ENCODE measurements at regions of chr16 and their contacts with region 1.

Region 1: GRCh38 chr16:75471723-75472633 is 7.5 kb upstream of the TMEM170A start:
- DNase-seq: peak; percentile 71
- H3K4me3 ChIP-seq: no peak overlapping the region
- H3K27ac ChIP-seq: no peak overlapping the region
- H3K4me1 ChIP-seq: peaks cover 0 to 15% (median 0%) of the 10 kb centered on the region in 6 donors
- H3K27me3 ChIP-seq: no peaks in the 10 kb centered on the region
- CTCF ChIP-seq: peak; percentile 34 to 84 (median 70)
- POLR2A ChIP-seq: no peak

Region 2: DNA sequence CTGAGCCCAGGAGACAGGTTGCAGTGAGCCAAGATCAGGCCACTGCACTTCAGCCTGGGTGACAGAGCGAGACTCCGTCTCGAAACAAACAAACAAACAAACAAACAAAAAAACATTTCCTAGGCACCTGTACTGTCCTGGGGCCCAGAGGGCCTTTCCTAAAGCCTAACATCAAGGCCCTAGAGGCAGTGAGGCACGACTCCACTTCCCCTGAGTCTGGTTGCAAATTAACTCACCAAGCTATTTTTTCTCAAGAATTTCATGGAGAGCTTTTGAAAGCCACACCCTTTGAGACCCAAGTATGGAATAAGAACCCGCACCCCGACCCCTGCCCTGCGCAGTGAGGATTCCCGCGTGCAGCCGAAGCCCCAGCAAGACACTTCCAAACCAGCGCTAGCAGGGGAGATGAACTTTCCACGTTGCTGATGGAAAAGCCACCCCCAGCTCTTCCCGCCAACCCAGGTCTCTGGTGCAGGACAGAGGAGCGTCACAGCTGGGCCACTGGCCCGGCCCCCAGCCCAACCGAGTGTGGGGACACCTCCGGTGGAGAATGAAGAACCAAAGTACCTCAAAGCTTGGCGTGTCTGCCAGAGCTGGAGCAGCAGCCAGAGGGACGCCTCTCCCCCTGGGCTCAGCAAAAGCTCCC is 62.7 kb after region 1 on chr16:
- intact Hi-C with region 1: no loop called
- DNase-seq: no peak
- H3K4me3 ChIP-seq: no peak overlapping the region
- H3K27ac ChIP-seq: no peak overlapping the region
- H3K4me1 ChIP-seq: no peaks in the 10 kb centered on the region
- H3K27me3 ChIP-seq: no peaks in the 10 kb centered on the region
- CTCF ChIP-seq: no peak
- POLR2A ChIP-seq: no peak

Region 3: DNA sequence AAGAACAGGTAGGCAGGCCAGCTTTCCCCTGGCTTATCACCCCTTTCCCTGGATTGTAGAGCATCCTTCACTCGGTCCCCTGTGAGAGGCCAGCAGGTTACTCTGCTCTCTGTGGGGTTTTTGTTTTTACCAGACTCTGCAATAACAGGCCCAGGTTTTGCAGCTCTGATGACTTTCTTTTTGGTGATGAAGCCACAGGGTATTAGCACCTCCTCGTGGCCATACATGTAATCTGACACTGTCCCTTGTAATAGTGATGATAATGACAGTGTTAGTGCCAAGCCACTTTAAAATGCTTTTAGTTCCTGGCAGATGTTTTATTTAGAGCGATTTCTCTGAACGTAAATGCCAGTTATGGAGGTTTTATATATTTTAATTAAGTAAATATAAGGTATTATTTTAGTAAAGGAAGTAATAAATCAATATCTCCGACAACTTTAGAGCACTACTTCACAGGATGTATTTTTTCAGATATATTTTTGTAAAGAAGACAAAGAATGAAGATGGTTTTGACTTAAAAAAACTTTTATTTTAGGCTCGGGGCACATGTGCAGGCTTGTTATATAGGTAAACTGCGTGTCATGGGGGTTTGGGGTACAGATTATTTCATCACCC is 292.3 kb after region 1 on chr16:
- intact Hi-C with region 1: loop called (anchors 2 kb)
- DNase-seq: no peak
- H3K4me3 ChIP-seq: no peak overlapping the region
- H3K27ac ChIP-seq: no peak overlapping the region
- H3K4me1 ChIP-seq: peaks cover 0 to 19% (median 2%) of the 10 kb centered on the region in 6 donors
- H3K27me3 ChIP-seq: no peaks in the 10 kb centered on the region
- CTCF ChIP-seq: peak; percentile 63 to 89 (median 76)
- POLR2A ChIP-seq: no peak